A549 (cell line): ENCODE measurements at regions of chr4 and their contacts with region 1.

Region 1: GRCh38 chr4:186946682-186947294 is 223.1 kb upstream of the FAT1 start:
- DNase-seq: peak; percentile 69 to 79
- ATAC-seq: peak; percentile 100
- H3K4me3 ChIP-seq: no peak overlapping the region
- H3K27ac ChIP-seq: 0 out of 6 replicates have a peak overlapping the region, but pooled peaks of 1 of the 2 experiments have one; percentile 43
- H3K4me1 ChIP-seq: peaks cover 6% of the 10 kb centered on the region; the same call in 1 of the 3 replicates
- CTCF ChIP-seq: peak; percentile 48
- EP300 ChIP-seq: no peak
- POLR2A ChIP-seq: no peak
- RAD21 ChIP-seq: peak; percentile 61 to 65

Region 2: DNA sequence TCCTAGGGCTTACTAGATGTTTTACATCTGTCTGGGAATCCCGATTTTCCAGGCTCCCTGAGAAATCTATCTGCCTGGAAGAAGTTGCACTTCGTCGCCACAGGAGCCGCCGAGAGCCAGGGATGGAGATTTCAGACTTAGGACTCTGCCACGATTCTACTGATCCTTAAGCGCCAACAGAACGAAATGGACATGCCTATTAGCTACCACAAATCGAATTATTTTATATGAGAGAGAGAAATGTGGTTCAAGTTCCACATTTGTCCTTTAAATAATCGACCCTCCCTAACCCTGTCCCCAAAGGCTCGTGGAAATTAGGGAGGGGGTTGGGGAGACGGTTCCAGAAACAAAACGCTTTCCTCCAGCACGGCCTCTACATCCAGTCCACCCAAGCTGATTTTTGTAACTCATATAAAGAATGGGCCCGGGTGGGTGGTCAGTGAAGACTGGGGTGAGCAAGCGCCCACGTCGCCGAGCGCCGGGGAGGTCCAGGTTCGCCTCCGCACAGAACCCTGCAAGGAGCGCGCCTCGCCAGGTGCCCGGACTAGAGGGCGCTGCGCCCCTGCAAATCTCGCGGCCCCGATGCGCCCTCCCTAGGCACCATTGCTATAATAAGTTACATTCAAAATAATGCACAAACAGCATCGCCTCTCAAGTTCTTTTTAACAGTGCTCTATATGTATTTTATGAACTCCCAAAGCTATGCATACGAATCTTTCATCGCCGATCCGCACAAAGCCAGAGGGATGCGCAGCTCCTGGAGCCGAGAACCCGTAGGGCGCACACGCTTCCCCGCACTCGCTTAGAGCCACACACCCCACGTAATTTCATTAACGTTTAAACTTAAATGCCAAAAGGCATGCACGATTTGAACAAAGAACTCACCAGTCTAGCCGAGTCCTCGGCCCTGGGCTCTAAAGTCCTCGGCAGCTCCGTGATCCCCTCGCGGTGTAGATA is 221.0 kb before region 1 on chr4:
- CTCF ChIA-PET with region 1: interaction called, 17 read pairs
- POLR2A ChIA-PET with region 1: no interaction called
- DNase-seq: peak; percentile 72 to 86
- ATAC-seq: peak; percentile 61 to 81
- H3K4me3 ChIP-seq: peak overlapping the region; percentile 67
- H3K27ac ChIP-seq: peak overlapping the region; percentile 89 to 100
- H3K4me1 ChIP-seq: peaks cover 29% of the 10 kb centered on the region
- CTCF ChIP-seq: peak; percentile 78
- EP300 ChIP-seq: no peak
- POLR2A ChIP-seq: no peak
- RAD21 ChIP-seq: peak; percentile 79 to 87